ENCODE measurements at regions of chr5 and their contacts with region 1.

Region 1: GRCh38 chr5:157718519-157718918 is 12.7 kb upstream of the THG1L start:
- DNase-seq: peak in 1 of 2 experiments; percentile 11
- H3K4me3 ChIP-seq: no peak overlapping the region
- H3K27ac ChIP-seq: no peak overlapping the region
- H3K4me1 ChIP-seq: peaks cover 6% of the 10 kb centered on the region; the same call in 1 of the 2 replicates
- H3K27me3 ChIP-seq: no peaks in the 10 kb centered on the region
- CTCF ChIP-seq: peak; percentile 75

Region 2: GRCh38 chr5:157366741-157367674 is 351.5 kb before region 1 on chr5:
- CTCF ChIA-PET with region 1: no interaction called
- POLR2A ChIA-PET with region 1: no interaction called
- intact Hi-C with region 1: loop called (anchors 1 kb)
- DNase-seq: no peak
- H3K4me3 ChIP-seq: no peak overlapping the region
- H3K27ac ChIP-seq: no peak overlapping the region
- H3K4me1 ChIP-seq: no peaks in the 10 kb centered on the region
- H3K27me3 ChIP-seq: no peaks in the 10 kb centered on the region
- CTCF ChIP-seq: peak; percentile 67

Region 3: GRCh38 chr5:157431544-157432200 is 286.8 kb before region 1 on chr5:
- CTCF ChIA-PET with region 1: no interaction called
- POLR2A ChIA-PET with region 1: no interaction called
- intact Hi-C with region 1: loop called (anchors 1 kb)
- DNase-seq: no peak
- H3K4me3 ChIP-seq: no peak overlapping the region
- H3K27ac ChIP-seq: no peak overlapping the region
- H3K4me1 ChIP-seq: no peaks in the 10 kb centered on the region
- H3K27me3 ChIP-seq: no peaks in the 10 kb centered on the region
- CTCF ChIP-seq: peak; percentile 63

Region 4: DNA sequence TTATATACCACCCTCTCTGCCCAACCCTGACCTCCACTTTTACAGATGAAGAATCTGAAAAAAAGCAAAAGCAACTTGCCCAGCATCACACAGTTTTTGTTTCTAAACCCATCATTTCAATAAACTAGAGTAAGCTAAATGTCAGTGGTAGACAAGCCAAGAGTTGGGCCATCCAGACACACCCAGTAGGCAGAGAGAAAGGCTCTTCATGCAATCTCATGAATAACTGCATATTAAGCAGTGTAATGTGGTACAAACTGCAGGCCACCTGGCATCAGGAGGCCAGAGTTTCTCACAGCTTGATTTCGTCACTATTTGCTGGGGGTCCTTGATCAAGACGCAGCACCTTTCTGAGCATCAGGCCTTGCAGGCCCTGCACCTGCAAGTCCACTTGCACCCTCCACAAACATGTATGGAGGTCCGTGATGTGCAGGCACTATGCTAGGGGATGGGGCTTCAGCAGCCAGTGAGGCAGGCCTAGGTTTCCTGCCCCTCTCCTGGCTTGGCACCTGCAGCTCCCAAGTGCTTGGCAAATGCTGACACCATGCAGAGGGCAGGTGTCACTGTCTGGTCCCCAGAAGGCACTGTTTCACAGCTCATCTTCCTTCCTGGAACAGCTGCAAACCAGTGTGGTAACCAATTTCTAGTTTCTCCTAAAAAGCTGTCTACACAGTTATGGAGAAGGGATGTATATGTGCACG is 172.8 kb before region 1 on chr5:
- CTCF ChIA-PET with region 1: interaction called, 13 read pairs
- POLR2A ChIA-PET with region 1: no interaction called
- intact Hi-C with region 1: no loop called
- DNase-seq: no peak
- H3K4me3 ChIP-seq: no peak overlapping the region
- H3K27ac ChIP-seq: no peak overlapping the region
- H3K4me1 ChIP-seq: peaks cover 35% of the 10 kb centered on the region
- H3K27me3 ChIP-seq: no peaks in the 10 kb centered on the region
- CTCF ChIP-seq: no peak

Region 5: DNA sequence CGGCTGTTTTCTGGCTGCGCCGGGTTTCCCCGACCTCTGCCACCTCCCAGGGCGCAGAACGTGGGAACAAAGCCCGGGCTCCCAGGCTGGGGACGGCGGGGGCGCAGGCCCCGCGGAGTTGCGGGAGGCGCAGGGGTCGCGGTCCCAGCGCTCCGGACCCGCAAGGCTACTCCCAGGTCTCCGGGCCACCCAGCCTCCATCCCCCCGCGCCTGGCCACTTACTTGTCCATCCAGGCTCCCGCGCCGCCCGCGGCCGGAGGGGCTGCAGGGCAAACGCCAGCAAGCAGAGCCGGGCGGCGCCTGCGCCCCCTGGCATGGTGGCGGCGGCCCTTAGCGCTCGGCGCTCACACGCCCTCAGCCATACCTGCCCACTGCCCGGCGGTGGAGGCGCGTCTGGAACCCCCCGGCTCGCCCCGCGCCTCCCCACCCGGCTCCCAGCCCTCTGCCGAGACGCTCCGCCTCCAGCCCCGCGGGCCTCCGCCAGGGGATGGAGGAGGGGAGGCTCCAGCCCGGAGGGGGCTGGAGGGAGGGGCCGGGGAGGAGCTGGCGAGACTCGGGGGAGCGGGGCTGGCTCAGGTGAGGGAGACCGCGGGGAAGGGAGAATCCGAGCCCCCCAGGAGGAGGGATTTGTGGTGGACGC is 143.0 kb before region 1 on chr5 and contains the start of gene ADAM19:
- CTCF ChIA-PET with region 1: no interaction called
- POLR2A ChIA-PET with region 1: interaction called, 44 read pairs
- intact Hi-C with region 1: loop called (anchors 1 kb)
- DNase-seq: peak in 1 of 2 experiments; percentile 50
- H3K4me3 ChIP-seq: peak within 1 kb of the TSS; percentile 62
- H3K27ac ChIP-seq: peak within 1 kb of the TSS; percentile 35
- H3K4me1 ChIP-seq: peaks cover 25% of the 10 kb centered on the region; the same call in 1 of the 2 replicates
- H3K27me3 ChIP-seq: no peaks in the 10 kb centered on the region
- CTCF ChIP-seq: no peak
- total RNA-seq, gene ADAM19: 7.6 and 9.3 TPM in 2 replicates

Region 6: GRCh38 chr5:157624144-157624543 is 94.4 kb before region 1 on chr5:
- CTCF ChIA-PET with region 1: no interaction called
- POLR2A ChIA-PET with region 1: no interaction called
- intact Hi-C with region 1: no loop called
- DNase-seq: no peak
- H3K4me3 ChIP-seq: no peak overlapping the region
- H3K27ac ChIP-seq: no peak overlapping the region
- H3K4me1 ChIP-seq: no peaks in the 10 kb centered on the region
- H3K27me3 ChIP-seq: no peaks in the 10 kb centered on the region
- CTCF ChIP-seq: no peak

Region 7: DNA sequence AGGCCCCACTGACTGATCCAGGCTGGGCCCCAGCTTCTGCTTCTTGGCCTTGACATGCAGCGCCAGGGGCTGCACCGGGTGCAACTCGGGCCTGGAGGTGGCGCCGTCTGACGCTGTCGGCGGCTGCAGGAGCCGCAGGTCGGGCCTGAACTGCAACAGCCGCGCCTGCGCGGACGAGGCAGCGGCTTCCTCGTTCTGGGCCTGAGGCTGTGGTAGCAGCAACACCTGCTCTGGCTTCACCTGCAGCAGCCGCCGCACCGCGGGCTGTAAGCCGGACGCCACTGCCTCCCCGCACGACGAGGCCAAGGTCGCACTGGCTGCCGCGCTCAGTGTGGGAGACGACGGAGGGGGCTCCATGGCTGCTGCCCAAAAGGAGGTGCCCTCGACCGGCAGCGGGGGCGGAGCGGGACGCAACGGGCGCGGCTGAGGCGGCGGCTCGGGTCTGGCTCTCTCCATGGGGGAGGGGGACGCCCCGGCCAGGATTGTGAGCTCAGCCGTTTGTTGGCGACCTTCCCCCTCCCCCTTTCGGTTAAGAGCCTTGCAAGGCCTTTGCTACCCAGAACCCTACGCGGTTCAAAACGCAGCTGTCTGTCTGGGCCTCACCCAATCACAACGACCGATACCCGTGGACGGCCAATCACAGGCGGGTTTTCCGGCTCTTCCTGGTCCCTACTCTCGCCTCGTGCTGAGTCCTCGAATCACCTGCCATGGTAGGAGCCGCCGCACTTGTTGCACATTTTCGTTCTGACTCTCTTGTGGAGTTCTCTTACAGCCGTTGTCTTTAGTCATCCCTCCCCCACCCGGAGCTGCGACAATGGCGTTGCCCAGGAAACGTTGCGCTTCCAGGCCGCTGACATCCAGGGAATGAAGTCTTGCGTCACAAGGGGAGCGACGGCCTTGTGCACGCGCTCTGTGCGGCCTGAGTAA is 66.6 kb before region 1 on chr5 and contains the start of gene SOX30:
- CTCF ChIA-PET with region 1: no interaction called
- POLR2A ChIA-PET with region 1: no interaction called
- intact Hi-C with region 1: loop called (anchors 5 kb)
- DNase-seq: peak in 1 of 2 experiments; percentile 53
- H3K4me3 ChIP-seq: no peak within 1 kb of the TSS; the same call in 1 of the 2 replicates
- H3K27ac ChIP-seq: no peak within 1 kb of the TSS
- H3K4me1 ChIP-seq: no peaks in the 10 kb centered on the region
- H3K27me3 ChIP-seq: no peaks in the 10 kb centered on the region
- CTCF ChIP-seq: no peak
- total RNA-seq, gene SOX30: 0.11 TPM in 1 of 2 replicates, not detected in the other

Region 8: DNA sequence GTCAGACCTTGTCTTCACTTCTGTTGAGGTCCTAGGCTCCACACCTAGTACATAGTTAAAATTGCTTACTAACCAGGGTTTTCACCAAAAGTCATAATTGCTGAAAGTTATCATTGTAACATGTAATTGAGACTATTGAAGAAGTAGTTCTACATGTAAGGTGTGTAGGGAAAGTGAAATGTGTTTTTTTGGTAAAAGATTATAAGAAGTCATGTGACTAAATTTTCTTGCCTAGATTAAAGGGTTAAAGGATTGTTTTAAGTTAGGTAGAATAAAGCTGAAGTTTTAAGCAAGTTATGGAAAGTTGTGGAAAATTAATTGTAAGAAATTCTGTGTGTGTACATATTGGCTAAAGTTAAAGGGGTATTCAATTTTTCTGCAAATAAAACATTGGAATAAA is 21.1 kb before region 1 on chr5:
- CTCF ChIA-PET with region 1: interaction called, 17 read pairs
- POLR2A ChIA-PET with region 1: no interaction called
- intact Hi-C with region 1: no loop called
- DNase-seq: no peak
- H3K4me3 ChIP-seq: no peak overlapping the region
- H3K27ac ChIP-seq: no peak overlapping the region
- H3K4me1 ChIP-seq: no peaks in the 10 kb centered on the region
- H3K27me3 ChIP-seq: no peaks in the 10 kb centered on the region
- CTCF ChIP-seq: no peak

Region 9: DNA sequence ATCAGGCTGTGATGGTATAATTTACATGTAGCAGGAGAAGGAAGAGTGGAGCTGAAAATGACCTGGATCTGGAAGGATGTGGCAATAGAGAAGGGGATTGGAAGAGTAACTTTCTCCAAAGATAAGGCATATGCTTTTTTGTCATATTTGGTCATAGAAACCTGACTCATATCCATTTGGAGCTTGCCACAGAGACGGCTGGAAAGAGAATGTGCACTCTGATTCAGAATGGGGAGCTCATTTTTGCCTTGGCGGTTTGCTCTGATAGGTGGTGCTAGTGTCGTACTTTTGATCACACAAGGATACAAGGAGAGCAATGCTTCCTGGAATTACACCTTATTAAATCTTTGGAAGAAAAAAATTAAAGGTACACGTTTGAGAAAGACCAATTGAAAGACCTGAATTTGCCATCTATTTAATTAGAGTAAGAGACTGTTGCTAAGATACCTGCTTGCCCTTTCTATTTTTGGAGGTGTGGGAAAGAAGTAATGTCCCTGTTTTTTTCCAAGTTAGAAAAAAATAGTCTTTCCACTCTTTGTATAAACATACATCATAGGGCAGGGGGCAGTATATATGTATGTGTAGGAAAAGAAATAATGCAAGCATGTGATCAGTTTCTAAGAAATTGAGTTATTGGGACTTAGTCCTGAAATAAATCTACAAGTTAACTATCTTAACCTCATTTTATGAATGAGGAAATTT is 30.4 kb after region 1 on chr5:
- CTCF ChIA-PET with region 1: no interaction called
- POLR2A ChIA-PET with region 1: no interaction called
- intact Hi-C with region 1: no loop called
- DNase-seq: no peak
- H3K4me3 ChIP-seq: no peak overlapping the region
- H3K27ac ChIP-seq: no peak overlapping the region
- H3K4me1 ChIP-seq: peaks cover 7% of the 10 kb centered on the region
- H3K27me3 ChIP-seq: no peaks in the 10 kb centered on the region
- CTCF ChIP-seq: no peak

Region 10: DNA sequence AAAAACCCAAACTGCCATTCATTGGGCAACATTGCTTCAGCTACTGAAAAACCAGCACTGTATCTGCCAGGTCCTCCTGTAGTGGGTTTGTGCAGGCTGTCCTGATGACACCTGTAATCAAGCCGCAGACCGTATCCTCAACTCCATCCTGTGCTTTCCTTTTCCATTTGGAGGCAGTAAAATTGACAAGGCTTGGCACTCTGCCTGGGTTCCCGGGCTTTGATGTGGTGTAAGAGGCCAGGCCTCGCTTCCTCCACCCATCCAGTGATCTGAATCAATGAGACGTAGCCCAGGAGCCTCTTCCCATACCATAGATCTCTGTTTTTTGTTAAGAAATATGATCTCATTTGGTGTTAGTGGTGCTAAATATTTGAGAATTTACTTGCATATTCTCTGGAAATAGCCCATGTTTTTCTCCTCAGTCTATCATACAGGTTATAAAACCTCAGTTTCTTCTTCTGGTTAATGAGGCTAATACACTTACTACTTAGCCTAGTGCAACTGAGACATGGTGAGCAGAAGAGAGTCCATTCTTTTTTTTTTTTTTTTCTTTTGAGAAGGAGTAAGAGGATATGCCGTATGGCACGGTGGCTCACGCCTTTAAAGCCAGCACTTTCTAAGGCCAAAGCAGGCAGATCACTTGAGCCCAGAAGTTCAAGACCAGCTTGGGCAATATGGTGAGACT is 59.7 kb after region 1 on chr5:
- CTCF ChIA-PET with region 1: no interaction called
- POLR2A ChIA-PET with region 1: no interaction called
- intact Hi-C with region 1: no loop called
- DNase-seq: no peak
- H3K4me3 ChIP-seq: no peak overlapping the region
- H3K27ac ChIP-seq: no peak overlapping the region
- H3K4me1 ChIP-seq: no peaks in the 10 kb centered on the region
- H3K27me3 ChIP-seq: no peaks in the 10 kb centered on the region
- CTCF ChIP-seq: no peak

Measured in PC-9 (cell line).